Calu3 (cell line): ENCODE measurements at regions of chr20 and their contacts with region 1.

Region 1: GRCh38 chr20:53869466-53870258 is 200.7 kb downstream of the BCAS1 start:
- DNase-seq: peak; percentile 90
- H3K4me3 Mint-ChIP-seq: no peak overlapping the region
- H3K27ac Mint-ChIP-seq: peak overlapping the region; percentile 80
- H3K4me1 Mint-ChIP-seq: peaks cover 76% of the 10 kb centered on the region
- H3K27me3 Mint-ChIP-seq: no peaks in the 10 kb centered on the region
- CTCF ChIP-seq: peak; percentile 77

Region 2: DNA sequence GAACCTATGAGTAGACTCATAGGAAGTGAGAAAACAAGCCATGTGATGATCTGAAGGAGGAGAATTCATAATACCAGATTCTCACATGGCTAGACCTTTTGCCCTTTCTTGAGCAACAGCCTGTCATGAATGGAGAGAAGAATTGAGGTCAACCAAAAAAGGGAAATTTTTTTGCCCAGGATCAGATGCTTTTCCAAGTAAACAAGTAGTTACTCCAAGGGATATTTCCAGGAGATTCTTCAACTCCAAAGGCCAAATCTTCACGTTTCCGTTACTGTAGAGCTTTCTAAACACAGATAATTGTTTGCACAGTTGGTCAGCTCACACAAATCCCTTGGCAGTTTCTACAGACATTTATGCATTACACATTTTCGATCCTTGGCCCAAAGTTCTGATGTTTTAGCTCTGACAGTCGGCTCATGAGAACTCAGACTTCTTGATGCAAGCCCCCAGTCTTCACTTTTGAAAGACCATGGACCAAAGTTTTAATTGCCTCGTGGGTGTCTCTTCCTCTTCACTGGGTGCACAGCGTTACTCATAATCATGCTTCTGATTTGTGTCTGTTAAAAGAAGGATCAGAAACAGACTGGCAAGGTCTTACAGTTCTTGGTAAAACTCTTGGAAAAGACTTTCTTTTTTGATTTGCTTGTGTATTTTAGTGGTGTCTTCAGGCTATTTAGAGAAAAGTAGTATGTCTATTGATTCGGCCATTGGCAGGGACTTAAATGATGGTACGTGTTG is 782.5 kb before region 1 on chr20:
- CTCF ChIA-PET with region 1: no interaction called
- intact Hi-C with region 1: no loop called
- DNase-seq: no peak
- H3K4me3 Mint-ChIP-seq: no peak overlapping the region
- H3K27ac Mint-ChIP-seq: no peak overlapping the region
- H3K4me1 Mint-ChIP-seq: no peaks in the 10 kb centered on the region
- H3K27me3 Mint-ChIP-seq: peaks cover 28% of the 10 kb centered on the region
- CTCF ChIP-seq: no peak

Region 3: GRCh38 chr20:53652090-53652858 is 217.4 kb before region 1 on chr20:
- CTCF ChIA-PET with region 1: no interaction called
- intact Hi-C with region 1: loop called (anchors 2 kb)
- DNase-seq: no peak
- H3K4me3 Mint-ChIP-seq: peak overlapping the region; percentile 39
- H3K27ac Mint-ChIP-seq: peak overlapping the region; percentile 57
- H3K4me1 Mint-ChIP-seq: peaks cover 43% of the 10 kb centered on the region
- H3K27me3 Mint-ChIP-seq: no peaks in the 10 kb centered on the region
- CTCF ChIP-seq: no peak

Region 4: GRCh38 chr20:53786445-53787267 is 83.0 kb before region 1 on chr20:
- CTCF ChIA-PET with region 1: interaction called, 8 read pairs
- intact Hi-C with region 1: loop called (anchors 2 kb)
- DNase-seq: peak; percentile 37
- H3K4me3 Mint-ChIP-seq: peak overlapping the region; percentile 51
- H3K27ac Mint-ChIP-seq: peak overlapping the region; percentile 78
- H3K4me1 Mint-ChIP-seq: peaks cover 42% of the 10 kb centered on the region
- H3K27me3 Mint-ChIP-seq: no peaks in the 10 kb centered on the region
- CTCF ChIP-seq: no peak

Region 5: GRCh38 chr20:53828682-53829254 is 40.9 kb before region 1 on chr20:
- CTCF ChIA-PET with region 1: interaction called, 4 read pairs
- intact Hi-C with region 1: loop called (anchors 1 kb)
- DNase-seq: peak; percentile 27
- H3K4me3 Mint-ChIP-seq: peak overlapping the region; percentile 64
- H3K27ac Mint-ChIP-seq: peak overlapping the region; percentile 98
- H3K4me1 Mint-ChIP-seq: peaks cover 55% of the 10 kb centered on the region
- H3K27me3 Mint-ChIP-seq: no peaks in the 10 kb centered on the region
- CTCF ChIP-seq: no peak

Region 6: GRCh38 chr20:53899351-53900167 is 29.9 kb after region 1 on chr20:
- CTCF ChIA-PET with region 1: interaction called, 19 read pairs
- intact Hi-C with region 1: loop called (anchors 1 kb)
- DNase-seq: peak; percentile 50
- H3K4me3 Mint-ChIP-seq: no peak overlapping the region
- H3K27ac Mint-ChIP-seq: peak overlapping the region; percentile 89
- H3K4me1 Mint-ChIP-seq: peaks cover 62% of the 10 kb centered on the region
- H3K27me3 Mint-ChIP-seq: no peaks in the 10 kb centered on the region
- CTCF ChIP-seq: no peak

Region 7: GRCh38 chr20:54062812-54063280 is 193.2 kb after region 1 on chr20:
- CTCF ChIA-PET with region 1: no interaction called
- intact Hi-C with region 1: loop called (anchors 10 kb)
- DNase-seq: peak; percentile 33
- H3K4me3 Mint-ChIP-seq: no peak overlapping the region
- H3K27ac Mint-ChIP-seq: no peak overlapping the region
- H3K4me1 Mint-ChIP-seq: peaks cover 22% of the 10 kb centered on the region
- H3K27me3 Mint-ChIP-seq: no peaks in the 10 kb centered on the region
- CTCF ChIP-seq: peak; percentile 69